Mammary epithelial cell (primary cell): ENCODE measurements at regions of chr16 and their contacts with region 1.

Region 1: GRCh38 chr16:82136956-82137821 is 32.8 kb downstream of the MPHOSPH6 start:
- DNase-seq: no peak
- H3K4me3 ChIP-seq: no peak overlapping the region
- H3K27ac ChIP-seq: no peak overlapping the region
- H3K4me1 ChIP-seq: no peaks in the 10 kb centered on the region
- H3K27me3 ChIP-seq: no peaks in the 10 kb centered on the region
- CTCF ChIP-seq: no peak

Region 2: GRCh38 chr16:81767987-81768592 is 369.1 kb before region 1 on chr16:
- CTCF ChIA-PET with region 1: no interaction called
- dilution Hi-C with region 1: no loop called
- in situ Hi-C with region 1: no loop called
- intact Hi-C with region 1: no loop called
- DNase-seq: no peak
- H3K4me3 ChIP-seq: no peak overlapping the region
- H3K27ac ChIP-seq: no peak overlapping the region
- H3K4me1 ChIP-seq: no peaks in the 10 kb centered on the region
- H3K27me3 ChIP-seq: no peaks in the 10 kb centered on the region
- CTCF ChIP-seq: no peak

Region 3: GRCh38 chr16:82111944-82112343 is 25.2 kb before region 1 on chr16:
- CTCF ChIA-PET with region 1: no interaction called
- dilution Hi-C with region 1: no loop called
- in situ Hi-C with region 1: no loop called
- intact Hi-C with region 1: no loop called
- DNase-seq: peak; percentile 99
- H3K4me3 ChIP-seq: no peak overlapping the region
- H3K27ac ChIP-seq: peak overlapping the region; percentile 73
- H3K4me1 ChIP-seq: peaks cover 17% of the 10 kb centered on the region
- H3K27me3 ChIP-seq: no peaks in the 10 kb centered on the region
- CTCF ChIP-seq: no peak

Region 4: DNA sequence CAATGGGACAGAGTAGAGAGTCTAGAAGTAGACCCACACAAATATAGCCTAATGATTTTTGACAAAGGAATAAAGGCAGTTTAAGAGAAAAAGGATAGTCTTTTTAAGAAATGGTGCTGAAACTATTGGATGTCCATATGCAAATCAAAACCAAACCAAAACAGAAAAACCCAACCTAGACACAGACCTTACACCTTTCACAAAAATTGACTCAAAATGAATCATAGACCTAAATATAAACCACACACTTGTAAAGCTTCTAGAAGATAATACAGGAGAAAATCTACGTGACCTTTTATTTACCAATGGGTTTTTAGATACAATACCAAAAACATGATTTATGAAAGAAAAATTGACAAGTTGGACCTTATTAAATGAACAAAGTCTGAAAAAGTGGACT is 99.2 kb after region 1 on chr16:
- CTCF ChIA-PET with region 1: no interaction called
- dilution Hi-C with region 1: loop called (anchors 5 kb)
- in situ Hi-C with region 1: no loop called
- intact Hi-C with region 1: no loop called
- DNase-seq: no peak
- H3K4me3 ChIP-seq: no peak overlapping the region
- H3K27ac ChIP-seq: no peak overlapping the region
- H3K4me1 ChIP-seq: peaks cover 10% of the 10 kb centered on the region
- H3K27me3 ChIP-seq: no peaks in the 10 kb centered on the region
- CTCF ChIP-seq: no peak